G401 (cell line): ENCODE measurements at regions of chr4 and their contacts with region 1.

Region 1: DNA sequence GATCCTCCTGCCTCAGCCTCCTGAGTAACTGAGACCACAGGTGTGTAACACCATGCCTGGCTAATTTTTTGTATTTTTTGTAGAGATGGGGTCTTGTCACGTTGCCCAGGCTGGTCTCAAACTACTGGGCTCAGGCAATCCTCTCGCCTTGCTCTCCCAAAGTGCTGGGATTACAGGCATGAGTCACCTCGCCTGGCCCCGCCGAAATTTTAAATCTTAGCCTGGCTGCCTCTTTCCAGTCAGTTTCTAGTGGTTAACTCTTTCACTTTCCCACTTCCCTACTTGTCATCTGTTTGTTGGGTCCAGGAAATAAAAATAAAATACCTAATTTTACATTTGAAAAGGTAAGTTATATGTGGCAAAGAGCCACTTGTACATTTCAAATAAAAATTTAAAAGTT is 62.4 kb downstream of the TMEM165 start:
- DNase-seq: no peak

Region 2: GRCh38 chr4:55546756-55547465 is 88.7 kb after region 1 on chr4 and contains the start of gene CLOCK:
- in situ Hi-C with region 1: loop called (anchors 5 kb)
- DNase-seq: peak; percentile 81
- total RNA-seq, gene CLOCK: 9.9 and 14.3 TPM in 2 replicates